ENCODE measurements at regions of chr16 and their contacts with region 1.

Region 1: GRCh38 chr16:87062569-87063442 is 254.4 kb downstream of the C16orf95 start:
- DNase-seq: no peak
- H3K4me3 ChIP-seq: peak overlapping the region; percentile 34
- CTCF ChIP-seq: peak; percentile 81

Region 2: GRCh38 chr16:86575754-86576557 is 486.9 kb before region 1 on chr16:
- CTCF ChIA-PET with region 1: interaction called, 309 read pairs
- POLR2A ChIA-PET with region 1: no interaction called
- DNase-seq: no peak
- H3K4me3 ChIP-seq: peak overlapping the region; percentile 73
- CTCF ChIP-seq: peak; percentile 82

Region 3: DNA sequence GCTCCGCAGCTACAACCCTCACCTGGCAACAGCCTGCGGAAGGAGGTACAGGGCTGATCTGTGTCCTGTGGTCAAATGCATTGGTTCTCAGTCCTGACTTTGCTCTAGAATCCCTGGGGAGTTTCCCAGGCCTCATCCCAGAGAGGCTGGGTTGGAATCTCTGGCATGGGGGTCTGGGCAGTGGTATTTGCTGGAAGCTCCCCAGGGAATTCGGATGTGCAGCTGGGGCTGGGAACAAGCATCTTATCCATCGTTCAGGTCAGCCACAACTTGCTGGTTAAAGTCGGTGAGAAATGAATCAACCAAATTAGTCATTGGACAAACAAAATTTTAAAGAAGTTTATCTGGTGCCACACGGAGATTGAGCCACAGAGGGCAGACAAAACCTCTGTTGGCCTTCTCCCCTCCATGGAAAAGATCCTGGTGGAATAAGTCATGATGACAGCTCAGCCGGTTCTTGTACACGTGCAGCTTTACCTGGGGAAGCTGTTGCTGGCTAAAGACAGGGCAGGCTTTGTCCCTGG is 253.3 kb before region 1 on chr16:
- CTCF ChIA-PET with region 1: interaction called, 13 read pairs
- POLR2A ChIA-PET with region 1: no interaction called
- DNase-seq: peak; percentile 90
- H3K4me3 ChIP-seq: no peak overlapping the region
- CTCF ChIP-seq: peak; percentile 25

Region 4: DNA sequence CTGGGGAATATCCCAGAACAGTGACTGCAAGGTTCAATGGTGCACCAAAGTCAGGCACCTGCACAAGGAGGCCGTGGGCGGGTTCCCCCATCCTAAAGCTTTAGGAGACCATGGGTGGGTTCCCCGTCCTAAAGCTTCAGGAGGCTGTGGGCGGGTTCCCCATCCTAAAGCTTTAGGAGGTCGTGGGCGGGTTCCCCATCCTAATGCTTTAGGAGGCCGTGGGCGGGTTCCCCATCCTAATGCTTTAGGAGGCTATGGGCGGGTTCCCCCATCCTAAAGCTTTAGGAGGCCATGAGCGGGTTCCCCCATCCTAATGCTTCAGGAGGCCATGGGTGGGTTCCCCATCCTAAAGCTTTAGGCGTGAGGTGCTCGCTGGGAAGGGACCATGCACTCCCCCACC is 171.2 kb before region 1 on chr16:
- CTCF ChIA-PET with region 1: interaction called, 10 read pairs
- POLR2A ChIA-PET with region 1: no interaction called
- DNase-seq: no peak
- H3K4me3 ChIP-seq: no peak overlapping the region
- CTCF ChIP-seq: no peak

Region 5: GRCh38 chr16:86984343-86984742 is 78.5 kb before region 1 on chr16:
- CTCF ChIA-PET with region 1: no interaction called
- POLR2A ChIA-PET with region 1: no interaction called
- DNase-seq: no peak
- H3K4me3 ChIP-seq: no peak overlapping the region
- CTCF ChIP-seq: no peak

Region 6: DNA sequence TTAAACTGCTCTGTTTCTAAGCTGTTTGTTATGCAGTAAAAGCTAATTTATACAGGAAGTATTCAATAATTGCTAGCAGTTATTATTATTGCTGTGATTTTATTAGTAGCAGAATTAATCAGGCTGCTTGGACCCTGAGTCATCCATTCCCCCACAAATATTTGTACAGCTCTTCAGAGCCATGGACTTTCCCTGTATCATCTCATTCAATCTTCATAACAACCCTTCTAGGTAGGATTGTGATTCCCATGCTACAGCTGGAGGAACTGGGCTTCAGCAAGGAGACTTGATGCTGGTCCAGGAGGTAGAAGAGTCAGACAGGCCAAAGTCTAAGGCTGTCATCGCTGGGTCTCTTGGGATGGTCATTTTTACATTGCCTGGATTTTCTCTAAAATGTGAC is 46.1 kb after region 1 on chr16:
- CTCF ChIA-PET with region 1: interaction called, 11 read pairs
- POLR2A ChIA-PET with region 1: no interaction called
- DNase-seq: no peak
- H3K4me3 ChIP-seq: no peak overlapping the region
- CTCF ChIP-seq: no peak

Region 7: DNA sequence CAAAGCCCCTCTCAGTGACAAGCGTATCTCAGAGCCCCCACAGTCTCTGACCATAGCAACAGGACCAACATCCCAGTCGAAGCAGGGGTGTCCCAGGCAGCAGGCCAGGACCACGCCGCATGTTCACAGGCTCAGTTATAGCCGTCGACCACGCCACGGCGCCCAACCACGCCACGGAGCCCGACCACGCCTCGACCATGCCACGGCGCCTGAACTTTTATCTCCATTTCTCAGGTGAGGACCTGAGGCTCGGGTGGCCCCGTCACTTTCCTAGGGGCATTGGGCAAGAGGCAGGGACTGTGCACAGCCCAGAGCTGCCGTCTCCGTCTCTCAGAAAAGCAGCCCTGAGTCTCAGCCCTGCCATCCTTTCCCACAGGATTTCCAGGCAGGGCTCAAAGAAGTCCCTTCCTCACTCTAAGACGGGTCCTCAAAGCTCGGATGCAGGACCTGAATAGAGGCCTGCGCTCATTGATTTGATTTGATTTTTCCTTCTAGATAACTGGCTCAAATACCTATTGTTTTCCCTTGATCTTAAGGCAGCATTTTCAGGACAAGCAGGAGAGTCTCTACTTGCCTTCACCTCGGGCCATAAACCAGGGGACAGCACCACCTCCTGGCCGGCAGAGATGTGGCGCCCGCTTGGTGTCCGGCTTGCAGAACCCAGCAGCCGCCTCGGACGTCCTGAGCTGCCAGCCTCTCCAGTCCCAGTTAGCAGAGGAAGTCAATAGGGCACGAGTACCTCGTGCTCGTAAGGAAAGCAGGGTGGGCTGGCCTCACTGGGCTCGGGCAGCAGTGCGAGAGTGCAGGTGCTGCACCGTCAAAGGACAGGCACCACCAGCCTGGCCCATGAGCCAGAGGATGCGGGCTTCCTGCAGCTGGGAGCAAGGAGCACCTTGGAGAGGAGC is 215.6 kb after region 1 on chr16:
- CTCF ChIA-PET with region 1: interaction called, 69 read pairs
- POLR2A ChIA-PET with region 1: no interaction called
- DNase-seq: peak; percentile 31
- H3K4me3 ChIP-seq: no peak overlapping the region
- CTCF ChIP-seq: peak; percentile 97

Measured in AG04449 (cell line).